ENCODE measurements at regions of chr16 and their contacts with region 1.

Region 1: GRCh38 chr16:85114909-85115567 is 2.8 kb upstream of the CIBAR2 start:
- DNase-seq: peak; percentile 99
- ATAC-seq: peak; percentile 93
- H3K4me3 Mint-ChIP-seq: peak overlapping the region; percentile 24; the same call in 1 of the 2 replicates
- H3K27ac Mint-ChIP-seq: peak overlapping the region; percentile 69
- H3K4me1 Mint-ChIP-seq: peaks cover 10% of the 10 kb centered on the region
- H3K27me3 Mint-ChIP-seq: no peaks in the 10 kb centered on the region
- CTCF ChIP-seq: peak; percentile 87

Region 2: DNA sequence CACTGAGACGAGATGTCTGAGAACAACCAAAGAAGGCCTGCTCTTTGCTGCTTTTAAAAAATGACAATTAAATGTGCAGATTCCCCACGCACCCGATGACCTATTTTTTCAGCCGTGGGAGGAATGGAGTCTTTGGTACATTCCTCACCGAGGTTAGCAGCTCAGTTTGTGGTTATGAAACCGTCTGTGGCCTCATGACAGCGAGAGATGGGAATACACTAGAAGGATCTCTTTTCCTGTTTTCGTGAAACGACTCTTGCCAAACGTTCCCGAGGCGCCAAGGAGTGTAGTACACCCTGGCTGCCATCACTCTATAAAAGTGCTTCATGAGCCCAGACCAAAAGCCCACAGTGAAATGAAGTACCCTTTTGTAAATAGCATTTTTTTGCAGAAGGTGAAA is 207.5 kb before region 1 on chr16:
- CTCF ChIA-PET with region 1: no interaction called
- POLR2A ChIA-PET with region 1: no interaction called
- DNase-seq: no peak
- ATAC-seq: no peak
- H3K4me3 Mint-ChIP-seq: no peak overlapping the region
- H3K27ac Mint-ChIP-seq: no peak overlapping the region
- H3K4me1 Mint-ChIP-seq: no peaks in the 10 kb centered on the region
- H3K27me3 Mint-ChIP-seq: no peaks in the 10 kb centered on the region
- CTCF ChIP-seq: no peak

Region 3: DNA sequence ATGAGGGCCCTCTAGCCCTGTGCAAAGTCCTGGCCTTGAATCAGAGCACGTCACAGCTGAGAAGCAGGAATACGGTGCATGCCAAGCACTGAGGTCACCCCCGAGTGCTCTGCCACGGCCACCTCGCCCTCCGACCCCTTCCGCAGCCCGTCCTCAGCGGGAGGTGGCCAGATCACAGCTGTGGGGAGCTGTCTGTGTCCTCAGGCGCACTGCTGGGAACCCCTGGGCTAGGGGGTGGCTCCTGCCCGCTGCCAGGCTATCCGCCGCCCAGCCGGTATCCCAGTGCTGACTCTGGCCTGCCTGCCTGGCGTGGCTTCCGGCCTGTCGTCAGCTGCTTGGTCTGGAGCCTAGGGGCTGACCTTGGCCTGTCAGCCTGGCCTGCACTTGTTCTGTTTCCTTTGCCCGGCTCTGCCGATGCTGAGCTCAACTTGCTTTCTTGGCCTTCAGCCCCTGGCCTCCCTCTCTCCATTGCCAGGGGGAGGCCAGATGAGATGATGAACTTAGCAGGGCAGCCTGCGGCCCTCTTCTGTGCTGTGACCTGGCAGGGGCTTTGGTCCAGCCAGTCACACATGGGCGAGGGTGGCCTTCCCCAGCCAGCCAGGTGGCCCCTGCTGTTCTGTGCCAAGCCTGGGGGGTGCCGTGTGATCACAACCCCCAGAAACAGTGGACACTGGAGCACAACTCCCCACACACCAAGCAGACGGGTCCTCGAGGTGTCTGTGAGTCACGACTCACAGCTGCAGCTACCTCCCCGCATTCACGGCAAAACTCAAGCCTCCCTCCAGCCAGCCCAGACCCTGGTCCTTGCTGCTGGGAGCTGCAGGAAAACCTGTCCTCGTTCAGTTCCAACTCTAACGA is 181.0 kb before region 1 on chr16:
- CTCF ChIA-PET with region 1: no interaction called
- POLR2A ChIA-PET with region 1: no interaction called
- DNase-seq: no peak
- ATAC-seq: no peak
- H3K4me3 Mint-ChIP-seq: no peak overlapping the region
- H3K27ac Mint-ChIP-seq: peak overlapping the region; percentile 49; the same call in 1 of the 2 replicates
- H3K4me1 Mint-ChIP-seq: no peaks in the 10 kb centered on the region
- H3K27me3 Mint-ChIP-seq: no peaks in the 10 kb centered on the region
- CTCF ChIP-seq: no peak

Region 4: DNA sequence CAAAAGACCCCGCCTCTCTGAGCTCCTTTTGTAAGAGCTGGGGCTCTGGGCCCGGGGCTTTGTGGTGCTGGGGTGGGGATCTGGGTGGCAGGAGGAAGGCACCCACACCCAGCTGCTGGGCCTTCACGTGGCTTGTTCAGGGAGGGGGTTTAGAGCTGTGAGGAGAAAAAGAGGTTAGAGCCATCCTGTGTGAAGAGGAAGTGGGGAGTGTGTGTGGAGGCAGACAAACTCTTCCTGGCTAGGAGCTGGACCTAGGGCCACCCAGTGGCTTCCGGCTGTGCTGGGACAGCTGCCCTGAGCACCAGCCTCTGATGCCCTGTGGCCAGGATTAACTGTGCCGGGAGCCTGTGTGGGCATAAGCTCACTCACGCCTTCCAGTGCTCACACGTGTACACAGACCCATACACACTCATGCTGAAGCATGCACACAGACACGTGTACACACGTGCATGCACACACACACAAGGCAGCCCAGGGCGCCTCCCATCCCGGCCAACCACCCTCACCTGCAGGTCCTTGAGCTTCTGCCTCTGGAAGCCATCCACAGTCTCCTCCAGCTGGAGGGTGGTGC is 10.1 kb before region 1 on chr16:
- CTCF ChIA-PET with region 1: interaction called, 42 read pairs
- POLR2A ChIA-PET with region 1: no interaction called
- DNase-seq: no peak
- ATAC-seq: no peak
- H3K4me3 Mint-ChIP-seq: no peak overlapping the region
- H3K27ac Mint-ChIP-seq: no peak overlapping the region
- H3K4me1 Mint-ChIP-seq: no peaks in the 10 kb centered on the region
- H3K27me3 Mint-ChIP-seq: no peaks in the 10 kb centered on the region; the same call in 1 of the 2 replicates
- CTCF ChIP-seq: no peak

Region 5: GRCh38 chr16:85151603-85152413 is 36.8 kb after region 1 on chr16:
- CTCF ChIA-PET with region 1: interaction called, 20 read pairs
- POLR2A ChIA-PET with region 1: no interaction called
- DNase-seq: no peak
- ATAC-seq: peak; percentile 38
- H3K4me3 Mint-ChIP-seq: no peak overlapping the region
- H3K27ac Mint-ChIP-seq: peak overlapping the region; percentile 58
- H3K4me1 Mint-ChIP-seq: peaks cover 7% of the 10 kb centered on the region; the same call in 1 of the 2 replicates
- H3K27me3 Mint-ChIP-seq: no peaks in the 10 kb centered on the region; the same call in 1 of the 2 replicates
- CTCF ChIP-seq: no peak

Region 6: DNA sequence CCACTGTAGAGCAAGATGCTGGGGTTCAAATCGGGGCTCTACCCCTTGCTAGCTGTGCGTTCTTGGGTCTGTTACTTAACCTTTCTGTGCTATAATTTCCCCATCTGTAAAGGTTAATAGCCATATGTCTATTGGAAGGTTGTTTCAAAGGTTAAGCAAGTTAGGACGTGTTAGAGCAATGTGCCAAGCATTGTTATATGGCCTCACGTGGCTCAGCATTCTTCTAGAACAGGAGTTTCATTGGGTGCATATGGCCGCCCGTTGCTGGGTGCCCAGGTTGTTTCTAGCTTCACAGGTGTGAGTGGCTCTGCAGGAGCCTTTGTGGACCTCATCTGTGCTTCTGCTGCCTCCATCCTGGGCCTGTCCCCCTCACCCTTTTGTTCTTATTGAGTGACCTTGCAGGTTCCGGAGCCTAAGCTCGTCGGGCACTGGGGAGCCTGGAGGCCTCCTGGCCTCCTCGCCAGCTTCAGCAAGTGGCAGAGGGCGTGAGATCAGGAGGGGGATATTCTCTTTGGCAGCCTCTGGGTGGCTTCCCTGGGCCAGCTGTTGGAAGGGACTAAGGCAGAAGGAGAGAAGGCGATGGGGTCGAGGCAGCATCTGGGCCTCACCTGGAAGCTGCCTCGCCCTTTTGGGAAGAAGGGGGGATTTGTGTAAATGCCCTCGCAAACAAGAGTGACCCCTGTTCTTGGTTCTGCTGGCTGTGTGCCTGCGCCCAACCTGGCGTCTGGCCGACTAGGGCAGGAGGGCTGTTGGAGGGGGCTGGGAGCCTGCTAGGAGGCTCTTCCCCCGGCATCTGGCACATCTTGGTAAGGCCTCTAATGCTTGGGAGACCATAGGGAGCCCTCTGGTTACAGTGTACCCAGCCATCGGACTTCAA is 77.4 kb after region 1 on chr16:
- CTCF ChIA-PET with region 1: interaction called, 21 read pairs
- POLR2A ChIA-PET with region 1: no interaction called
- DNase-seq: no peak
- ATAC-seq: no peak
- H3K4me3 Mint-ChIP-seq: no peak overlapping the region
- H3K27ac Mint-ChIP-seq: no peak overlapping the region
- H3K4me1 Mint-ChIP-seq: peaks cover 14% of the 10 kb centered on the region
- H3K27me3 Mint-ChIP-seq: no peaks in the 10 kb centered on the region
- CTCF ChIP-seq: no peak

Region 7: DNA sequence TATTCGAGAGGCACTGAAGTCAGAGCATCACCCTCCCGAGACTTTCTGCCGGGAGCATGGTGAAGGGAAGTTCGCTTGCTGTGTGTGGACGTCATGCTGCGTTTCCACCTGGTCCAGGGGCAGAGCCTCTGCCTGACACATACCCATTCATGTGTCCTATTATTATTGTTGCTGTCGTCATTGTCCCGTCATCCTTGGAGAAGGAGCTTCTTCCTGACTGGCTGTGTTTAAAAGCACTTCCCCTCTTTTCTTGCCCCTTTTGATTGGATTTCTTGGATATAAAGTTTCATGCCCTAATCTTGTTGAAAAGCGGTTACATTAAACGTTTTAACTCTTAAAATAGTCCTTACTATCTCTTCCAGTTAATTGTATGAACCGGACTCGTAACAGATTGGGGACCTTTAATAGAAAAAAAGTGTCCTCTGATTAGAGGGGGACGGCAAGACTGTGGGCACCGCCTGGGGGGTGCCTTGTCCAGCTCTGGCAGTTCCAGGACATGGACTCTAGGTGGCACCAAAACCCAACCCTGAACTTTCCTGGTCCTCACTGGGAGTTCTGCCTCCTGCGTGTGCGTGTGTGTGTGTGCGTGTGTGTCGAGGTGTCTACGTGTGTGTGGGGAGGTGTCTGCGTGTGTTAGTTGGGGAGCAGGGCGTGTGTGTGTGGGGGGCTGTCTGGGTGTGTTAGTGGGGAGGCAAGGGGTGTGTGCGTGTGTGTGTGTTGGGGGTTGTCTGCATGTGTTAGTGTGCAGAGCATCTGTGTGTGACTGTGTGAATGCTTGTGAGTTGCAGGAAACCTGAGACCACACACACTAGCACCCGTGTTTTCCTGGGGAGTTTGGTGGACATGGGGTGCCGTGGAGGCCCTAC is 130.5 kb after region 1 on chr16:
- CTCF ChIA-PET with region 1: interaction called, 20 read pairs
- POLR2A ChIA-PET with region 1: interaction called, 3 read pairs
- DNase-seq: peak; percentile 73
- ATAC-seq: peak; percentile 77
- H3K4me3 Mint-ChIP-seq: no peak overlapping the region
- H3K27ac Mint-ChIP-seq: no peak overlapping the region
- H3K4me1 Mint-ChIP-seq: peaks cover 24% of the 10 kb centered on the region
- H3K27me3 Mint-ChIP-seq: no peaks in the 10 kb centered on the region
- CTCF ChIP-seq: peak; percentile 65

Region 8: GRCh38 chr16:85309656-85310587 is 194.9 kb after region 1 on chr16:
- CTCF ChIA-PET with region 1: interaction called, 14 read pairs
- POLR2A ChIA-PET with region 1: no interaction called
- DNase-seq: no peak
- ATAC-seq: peak; percentile 7
- H3K4me3 Mint-ChIP-seq: no peak overlapping the region
- H3K27ac Mint-ChIP-seq: no peak overlapping the region
- H3K4me1 Mint-ChIP-seq: peaks cover 68% of the 10 kb centered on the region
- H3K27me3 Mint-ChIP-seq: no peaks in the 10 kb centered on the region; the same call in 1 of the 2 replicates
- CTCF ChIP-seq: no peak

Region 9: GRCh38 chr16:85437166-85438055 is 322.4 kb after region 1 on chr16:
- CTCF ChIA-PET with region 1: interaction called, 15 read pairs
- POLR2A ChIA-PET with region 1: no interaction called
- DNase-seq: no peak
- ATAC-seq: peak; percentile 21
- H3K4me3 Mint-ChIP-seq: peak overlapping the region; percentile 50
- H3K27ac Mint-ChIP-seq: peak overlapping the region; percentile 51; the same call in 1 of the 2 replicates
- H3K4me1 Mint-ChIP-seq: peaks cover 39% of the 10 kb centered on the region
- H3K27me3 Mint-ChIP-seq: no peaks in the 10 kb centered on the region
- CTCF ChIP-seq: no peak